Activated CD8-positive, alpha-beta memory T cell treated with anti-CD3 and anti-CD28 coated beads, Interleukin-2, amount 10 ng/mL, durations not matched to agents 7 days and 5 days (primary cell): ENCODE measurements at regions of chr22 and their contacts with region 1.

Region 1: DNA sequence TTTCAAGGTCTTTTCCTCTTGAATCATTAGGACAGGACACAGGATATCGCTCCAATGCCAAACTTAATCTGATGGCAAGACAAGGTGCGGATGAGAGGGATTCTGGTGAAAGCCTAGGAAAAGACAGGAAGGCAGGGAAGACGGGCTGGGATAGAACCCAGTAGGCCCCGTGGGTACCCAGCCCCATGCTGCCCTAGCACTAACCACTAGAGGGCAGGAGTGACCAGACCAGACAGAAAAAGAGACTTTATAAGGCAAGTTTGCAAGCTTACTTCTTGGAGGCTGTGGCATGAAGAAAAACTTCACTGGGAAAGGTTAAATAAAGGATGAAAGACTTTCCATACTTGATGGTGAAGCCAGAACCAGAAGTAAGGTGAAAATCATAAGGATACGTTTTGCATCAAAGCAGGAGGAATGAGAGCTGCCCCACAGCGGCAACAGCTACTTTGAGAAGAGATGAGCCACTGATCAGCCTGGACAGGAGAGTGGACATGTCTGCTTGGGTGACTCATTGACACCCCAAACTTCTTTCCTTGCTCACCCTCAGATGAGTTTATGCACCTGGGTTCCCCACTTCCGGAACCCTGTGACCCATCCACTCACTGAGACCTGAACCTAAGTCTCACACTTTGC is 39.8 kb downstream of the SYN3 start:
- DNase-seq: peak; percentile 50
- ATAC-seq: no peak
- H3K4me3 Mint-ChIP-seq: no peak overlapping the region
- H3K27ac Mint-ChIP-seq: no peak overlapping the region
- H3K4me1 Mint-ChIP-seq: no peaks in the 10 kb centered on the region
- H3K27me3 Mint-ChIP-seq: no peaks in the 10 kb centered on the region

Region 2: GRCh38 chr22:33038131-33038772 is 19.9 kb after region 1 on chr22:
- CTCF ChIA-PET with region 1: interaction called, 10 read pairs
- DNase-seq: no peak
- ATAC-seq: no peak
- H3K4me3 Mint-ChIP-seq: no peak overlapping the region
- H3K27ac Mint-ChIP-seq: no peak overlapping the region
- H3K4me1 Mint-ChIP-seq: no peaks in the 10 kb centered on the region
- H3K27me3 Mint-ChIP-seq: no peaks in the 10 kb centered on the region